GM12878 (cell line): ENCODE measurements at regions of chr11 and their contacts with region 1.

Region 1: DNA sequence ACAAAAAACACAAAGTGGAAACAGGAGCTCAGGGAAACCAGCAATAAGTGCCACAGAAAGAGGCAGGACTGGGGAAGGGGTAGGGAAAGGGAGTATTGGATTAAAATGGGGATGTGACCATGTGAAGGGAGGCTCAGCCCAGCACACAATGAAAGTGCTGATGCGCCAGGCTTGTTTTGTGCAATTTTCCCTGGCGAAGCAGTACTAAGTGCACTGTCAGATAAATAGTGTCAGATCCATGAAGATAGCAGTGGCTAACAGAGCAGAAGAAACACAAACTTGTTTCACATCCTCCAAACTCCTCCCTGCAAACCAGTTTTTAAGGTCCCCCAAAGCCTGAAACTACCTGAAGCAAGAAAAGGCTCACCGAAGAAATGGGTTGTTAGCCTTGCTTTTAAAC is 50.7 kb upstream of the RAPSN start:
- DNase-seq: no peak
- ATAC-seq: peak; percentile 52
- H3K4me3 ChIP-seq: no peak overlapping the region
- H3K27ac ChIP-seq: peak overlapping the region; percentile 14
- H3K4me1 ChIP-seq: peaks cover 49% of the 10 kb centered on the region
- H3K27me3 ChIP-seq: no peaks in the 10 kb centered on the region
- CTCF ChIP-seq: no peak
- EP300 ChIP-seq: no peak
- POLR2A ChIP-seq: no peak
- RAD21 ChIP-seq: no peak

Region 2: DNA sequence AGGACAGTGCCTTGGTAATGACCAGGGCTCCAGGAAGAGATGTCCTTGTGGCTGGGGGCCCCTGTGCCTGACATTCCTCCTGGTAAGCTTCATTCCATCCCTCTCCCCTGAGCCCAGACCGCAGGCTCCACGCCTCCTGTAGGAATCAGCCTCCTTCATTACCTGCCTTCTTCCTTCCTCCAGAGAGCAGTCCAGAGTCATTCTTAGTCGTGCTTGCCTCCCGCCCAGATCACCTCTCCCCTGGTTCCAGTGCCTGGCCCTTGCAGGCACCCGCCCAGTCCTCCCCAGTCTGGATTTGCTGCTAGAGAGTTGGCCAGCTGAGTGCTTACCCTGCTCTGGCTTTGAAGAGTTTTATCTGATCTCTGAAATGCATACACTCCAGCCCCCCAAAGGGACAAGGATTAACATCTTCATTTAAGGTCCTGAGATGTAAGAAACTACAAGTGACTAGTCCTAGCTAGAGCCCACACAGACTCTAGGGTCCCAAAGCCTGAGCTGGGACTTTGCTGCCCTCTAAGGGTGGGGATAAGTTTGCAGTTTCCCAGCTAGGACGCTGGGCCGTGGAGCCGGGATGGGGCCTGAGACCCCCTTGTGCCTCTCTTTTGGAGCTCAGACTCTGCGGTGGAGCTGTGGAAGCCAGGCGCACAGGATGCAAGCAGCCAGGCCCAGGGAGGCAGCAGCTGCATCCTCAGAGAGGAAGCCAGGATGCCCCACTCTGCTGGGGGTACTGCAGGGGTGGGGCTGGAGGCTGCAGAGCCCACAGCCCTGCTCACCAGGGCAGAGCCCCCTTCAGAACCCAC is 240.2 kb before region 1 on chr11:
- CTCF ChIA-PET with region 1: no interaction called
- POLR2A ChIA-PET with region 1: no interaction called
- RAD21 ChIA-PET with region 1: no interaction called
- SMC1A ChIA-PET with region 1: no interaction called
- in situ Hi-C with region 1: no loop called
- intact Hi-C with region 1: no loop called
- DNase-seq: no peak
- ATAC-seq: peak; percentile 94
- H3K4me3 ChIP-seq: no peak overlapping the region
- H3K27ac ChIP-seq: no peak overlapping the region
- H3K4me1 ChIP-seq: no peaks in the 10 kb centered on the region
- H3K27me3 ChIP-seq: no peaks in the 10 kb centered on the region
- CTCF ChIP-seq: peak; percentile 68 to 81 (median 76)
- EP300 ChIP-seq: no peak
- POLR2A ChIP-seq: no peak
- RAD21 ChIP-seq: peak; percentile 75

Region 3: GRCh38 chr11:47469361-47470179 is 30.0 kb before region 1 on chr11:
- CTCF ChIA-PET with region 1: no interaction called
- POLR2A ChIA-PET with region 1: no interaction called
- RAD21 ChIA-PET with region 1: no interaction called
- SMC1A ChIA-PET with region 1: no interaction called
- in situ Hi-C with region 1: no loop called
- intact Hi-C with region 1: no loop called
- DNase-seq: no peak
- ATAC-seq: no peak
- H3K4me3 ChIP-seq: no peak overlapping the region
- H3K27ac ChIP-seq: no peak overlapping the region
- H3K4me1 ChIP-seq: no peaks in the 10 kb centered on the region
- H3K27me3 ChIP-seq: no peaks in the 10 kb centered on the region
- CTCF ChIP-seq: no peak
- EP300 ChIP-seq: no peak
- POLR2A ChIP-seq: no peak
- RAD21 ChIP-seq: no peak

Region 4: GRCh38 chr11:47488674-47489394 is 10.8 kb before region 1 on chr11:
- CTCF ChIA-PET with region 1: interaction called, 4 read pairs
- POLR2A ChIA-PET with region 1: interaction called, 3 read pairs
- RAD21 ChIA-PET with region 1: no interaction called
- SMC1A ChIA-PET with region 1: interaction called, 19 read pairs
- in situ Hi-C with region 1: no loop called
- intact Hi-C with region 1: no loop called
- DNase-seq: no peak
- ATAC-seq: no peak
- H3K4me3 ChIP-seq: no peak overlapping the region
- H3K27ac ChIP-seq: no peak overlapping the region
- H3K4me1 ChIP-seq: no peaks in the 10 kb centered on the region
- H3K27me3 ChIP-seq: no peaks in the 10 kb centered on the region
- CTCF ChIP-seq: no peak
- EP300 ChIP-seq: no peak
- POLR2A ChIP-seq: no peak
- RAD21 ChIP-seq: no peak

Region 5: GRCh38 chr11:47514825-47515647 is 15.4 kb after region 1 on chr11:
- CTCF ChIA-PET with region 1: interaction called, 5 read pairs
- POLR2A ChIA-PET with region 1: interaction called, 5 read pairs
- RAD21 ChIA-PET with region 1: interaction called, 8 read pairs
- SMC1A ChIA-PET with region 1: interaction called, 21 read pairs
- in situ Hi-C with region 1: no loop called
- intact Hi-C with region 1: no loop called
- DNase-seq: no peak
- ATAC-seq: peak; percentile 69
- H3K4me3 ChIP-seq: peak overlapping the region; percentile 12; the same call in 1 of the 2 replicates
- H3K27ac ChIP-seq: peak overlapping the region; percentile 62
- H3K4me1 ChIP-seq: peaks cover 71% of the 10 kb centered on the region
- H3K27me3 ChIP-seq: no peaks in the 10 kb centered on the region
- CTCF ChIP-seq: no peak
- EP300 ChIP-seq: no peak
- POLR2A ChIP-seq: no peak
- RAD21 ChIP-seq: no peak

Region 6: GRCh38 chr11:47572715-47573255 is 73.2 kb after region 1 on chr11:
- CTCF ChIA-PET with region 1: no interaction called
- POLR2A ChIA-PET with region 1: no interaction called
- RAD21 ChIA-PET with region 1: no interaction called
- SMC1A ChIA-PET with region 1: no interaction called
- in situ Hi-C with region 1: no loop called
- intact Hi-C with region 1: no loop called
- DNase-seq: no peak
- ATAC-seq: no peak
- H3K4me3 ChIP-seq: no peak overlapping the region
- H3K27ac ChIP-seq: no peak overlapping the region
- H3K4me1 ChIP-seq: peaks cover 4% of the 10 kb centered on the region
- H3K27me3 ChIP-seq: no peaks in the 10 kb centered on the region
- CTCF ChIP-seq: no peak
- EP300 ChIP-seq: no peak
- POLR2A ChIP-seq: no peak
- RAD21 ChIP-seq: no peak